ENCODE measurements at regions of chr10 and their contacts with region 1.

Region 1: DNA sequence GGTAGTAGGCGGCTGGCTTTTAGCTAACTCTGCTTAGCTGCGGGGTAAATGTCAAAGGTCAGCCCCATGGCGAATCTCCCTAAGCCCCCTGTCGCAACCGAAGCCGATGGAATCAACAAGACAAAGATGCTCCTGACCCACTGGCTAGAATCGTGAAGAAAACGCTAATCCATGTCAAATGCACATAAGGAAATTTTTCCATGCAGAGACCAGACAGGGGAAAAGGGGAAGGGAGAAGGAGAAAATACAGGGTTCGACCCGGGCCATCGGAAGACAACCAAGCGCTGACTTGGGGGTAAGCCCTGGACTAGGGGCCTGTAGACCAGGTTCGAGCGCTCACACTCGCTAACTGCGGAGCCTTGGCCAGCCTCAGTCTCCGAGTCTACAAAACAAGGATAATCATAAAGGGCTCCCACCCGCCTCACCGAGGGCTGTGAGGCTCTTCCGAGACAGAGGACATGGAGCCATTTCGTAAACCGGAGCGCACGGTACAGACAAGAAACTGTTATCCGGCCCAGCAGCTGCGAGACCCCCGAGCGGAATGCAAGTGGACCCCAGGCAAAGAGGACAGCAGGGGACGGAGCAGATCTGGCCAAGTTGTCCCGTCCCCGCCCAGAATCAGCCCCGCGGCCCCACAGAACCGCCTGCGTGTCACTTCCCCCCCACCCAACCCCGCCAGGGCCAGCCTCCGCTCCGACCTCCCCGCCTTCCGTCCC is 507 bp downstream of the SAR1A start:
- H3K4me3 ChIP-seq: peak overlapping the region; percentile 87
- H3K27ac ChIP-seq: peak overlapping the region; percentile 16; the same call in 1 of the 2 replicates
- H3K4me1 ChIP-seq: 0 out of 2 replicates have a peak, but pooled peaks cover 4% of the 10 kb centered on the region
- CTCF ChIP-seq: no peak

Region 2: GRCh38 chr10:69918036-69918435 is 251.8 kb before region 1 on chr10:
- CTCF ChIA-PET with region 1: no interaction called
- POLR2A ChIA-PET with region 1: no interaction called
- H3K4me3 ChIP-seq: no peak overlapping the region
- H3K27ac ChIP-seq: no peak overlapping the region
- H3K4me1 ChIP-seq: no peaks in the 10 kb centered on the region
- CTCF ChIP-seq: no peak

Region 3: DNA sequence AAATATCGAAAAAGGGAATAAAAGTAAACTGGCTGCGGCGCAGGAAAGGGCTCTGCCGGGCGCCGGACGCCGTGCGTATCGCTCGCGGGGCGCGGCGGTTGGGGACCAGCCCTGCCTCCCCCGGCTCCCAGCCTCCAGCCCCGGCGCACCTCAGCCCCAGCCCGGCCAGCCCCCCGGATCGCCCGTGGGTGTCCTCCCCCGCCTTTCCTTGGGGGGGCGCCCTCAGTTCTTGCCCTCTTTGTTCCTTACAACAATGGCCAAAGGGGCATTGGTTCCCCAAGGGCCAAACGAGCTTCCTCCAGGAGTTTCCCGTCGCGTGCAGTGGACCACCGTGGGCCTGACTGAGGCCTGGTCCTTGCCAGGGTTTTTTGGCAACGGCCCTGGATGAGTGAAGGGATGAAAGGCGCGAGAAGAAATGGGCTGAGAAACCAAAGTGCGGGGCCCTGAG is 115.9 kb before region 1 on chr10:
- CTCF ChIA-PET with region 1: no interaction called
- POLR2A ChIA-PET with region 1: interaction called, 14 read pairs
- H3K4me3 ChIP-seq: peak overlapping the region; percentile 56
- H3K27ac ChIP-seq: peak overlapping the region; percentile 89; the same call in 1 of the 2 replicates
- H3K4me1 ChIP-seq: peaks cover 15% of the 10 kb centered on the region
- CTCF ChIP-seq: peak; percentile 63

Region 4: DNA sequence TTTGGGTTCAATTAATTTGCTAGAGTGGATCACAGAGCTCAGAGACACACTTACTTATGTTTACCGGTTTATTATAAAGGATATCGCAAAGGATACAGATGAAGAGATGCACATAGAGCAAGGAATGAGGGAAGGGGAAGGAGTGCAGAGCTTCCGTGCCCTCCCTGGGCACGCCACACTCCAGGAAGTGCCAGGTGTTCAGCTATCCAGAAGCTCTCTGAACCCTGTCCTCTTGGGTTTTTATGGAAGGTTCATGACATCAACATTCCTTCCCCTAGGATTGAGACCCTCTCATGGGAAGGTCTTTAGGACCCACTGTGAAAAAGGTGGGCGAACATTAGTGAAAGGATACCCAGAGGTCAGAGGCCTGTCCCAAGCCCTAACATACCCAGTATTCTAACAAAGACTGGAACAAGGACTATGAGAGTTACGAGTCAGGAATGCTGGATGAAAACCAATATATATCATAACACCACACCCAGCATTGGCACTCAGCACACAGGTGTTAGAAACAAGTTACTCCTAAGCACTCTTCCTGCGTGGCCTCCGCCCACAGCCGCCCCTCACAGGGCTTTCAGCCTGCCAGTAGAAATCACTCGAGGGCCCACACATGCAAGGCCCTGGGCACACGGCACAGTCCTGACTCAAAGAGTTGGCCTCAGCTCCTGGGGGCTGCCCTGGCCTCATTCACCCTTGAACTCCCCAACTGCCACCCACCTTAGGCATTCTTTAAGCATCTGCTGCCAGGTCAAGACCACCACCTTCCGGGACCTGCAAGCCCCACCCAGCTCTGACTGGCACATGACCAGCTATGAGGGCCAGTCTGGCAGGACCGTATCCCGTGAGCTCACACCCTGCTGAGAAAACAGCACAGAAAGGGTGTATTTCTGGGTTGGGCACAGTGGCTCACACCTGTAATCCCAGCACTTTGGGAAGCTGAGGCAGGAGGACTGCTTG is 31.6 kb before region 1 on chr10:
- CTCF ChIA-PET with region 1: no interaction called
- POLR2A ChIA-PET with region 1: interaction called, 14 read pairs
- H3K4me3 ChIP-seq: no peak overlapping the region
- H3K27ac ChIP-seq: no peak overlapping the region
- H3K4me1 ChIP-seq: no peaks in the 10 kb centered on the region
- CTCF ChIP-seq: no peak

Region 5: GRCh38 chr10:70191161-70191971 is 21.6 kb after region 1 on chr10:
- CTCF ChIA-PET with region 1: no interaction called
- POLR2A ChIA-PET with region 1: interaction called, 10 read pairs
- H3K4me3 ChIP-seq: no peak overlapping the region
- H3K27ac ChIP-seq: no peak overlapping the region
- H3K4me1 ChIP-seq: peaks cover 17% of the 10 kb centered on the region
- CTCF ChIP-seq: no peak

Region 6: DNA sequence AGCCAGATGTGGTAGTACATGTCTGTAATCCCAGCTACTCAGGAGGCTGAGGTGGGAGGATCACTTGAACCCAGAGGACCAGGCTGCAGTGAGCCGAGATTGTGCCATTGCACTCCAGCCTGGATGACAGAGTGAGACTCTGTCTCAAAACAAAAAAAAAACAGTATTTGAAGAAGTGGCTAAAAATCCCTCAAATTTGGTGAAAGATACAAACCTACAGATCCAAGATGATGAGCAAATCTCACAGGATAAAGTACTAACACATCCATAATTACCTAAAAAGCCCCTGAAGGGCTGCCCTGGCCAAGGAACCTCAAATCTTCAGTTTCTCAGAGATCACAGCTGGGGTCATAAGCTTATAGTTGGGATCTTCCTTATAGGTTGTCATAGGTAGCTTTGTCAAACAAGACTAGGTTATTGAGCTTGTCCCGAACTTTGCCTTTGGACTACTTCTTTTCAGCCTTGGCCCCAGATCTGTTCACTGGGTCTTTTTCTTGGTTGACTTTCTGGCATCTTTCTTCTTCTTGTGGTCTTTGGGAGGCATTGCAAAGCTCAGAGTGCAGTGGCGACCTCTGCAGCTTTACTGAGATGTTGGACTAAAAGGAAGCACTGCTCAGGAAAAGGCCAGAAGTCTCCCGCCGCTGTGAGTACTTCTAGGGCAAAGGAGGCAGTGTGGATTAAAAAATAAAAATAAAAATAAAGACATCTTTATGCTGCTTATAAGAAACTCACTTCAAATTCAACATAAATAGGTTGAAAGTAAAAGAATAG is 29.1 kb after region 1 on chr10:
- CTCF ChIA-PET with region 1: no interaction called
- POLR2A ChIA-PET with region 1: interaction called, 10 read pairs
- H3K4me3 ChIP-seq: no peak overlapping the region
- H3K27ac ChIP-seq: no peak overlapping the region
- H3K4me1 ChIP-seq: no peaks in the 10 kb centered on the region
- CTCF ChIP-seq: no peak

Region 7: GRCh38 chr10:70233109-70233938 is 63.5 kb after region 1 on chr10 and contains the start of gene PPA1:
- CTCF ChIA-PET with region 1: no interaction called
- POLR2A ChIA-PET with region 1: interaction called, 14 read pairs
- H3K4me3 ChIP-seq: peak within 1 kb of the TSS; percentile 87
- H3K27ac ChIP-seq: peak within 1 kb of the TSS; percentile 87
- H3K4me1 ChIP-seq: no peaks in the 10 kb centered on the region
- CTCF ChIP-seq: peak; percentile 14; the same call in 1 of the 2 replicates

Region 8: GRCh38 chr10:70404036-70404786 is 234.4 kb after region 1 on chr10 and contains the start of gene EIF4EBP2:
- CTCF ChIA-PET with region 1: no interaction called
- POLR2A ChIA-PET with region 1: interaction called, 14 read pairs
- H3K4me3 ChIP-seq: peak within 1 kb of the TSS; percentile 76
- H3K27ac ChIP-seq: peak within 1 kb of the TSS; percentile 66
- H3K4me1 ChIP-seq: peaks cover 6% of the 10 kb centered on the region; the same call in 1 of the 2 replicates
- CTCF ChIP-seq: no peak